GM12878 (cell line): ENCODE measurements at regions of chr4 and their contacts with region 1.

Region 1: DNA sequence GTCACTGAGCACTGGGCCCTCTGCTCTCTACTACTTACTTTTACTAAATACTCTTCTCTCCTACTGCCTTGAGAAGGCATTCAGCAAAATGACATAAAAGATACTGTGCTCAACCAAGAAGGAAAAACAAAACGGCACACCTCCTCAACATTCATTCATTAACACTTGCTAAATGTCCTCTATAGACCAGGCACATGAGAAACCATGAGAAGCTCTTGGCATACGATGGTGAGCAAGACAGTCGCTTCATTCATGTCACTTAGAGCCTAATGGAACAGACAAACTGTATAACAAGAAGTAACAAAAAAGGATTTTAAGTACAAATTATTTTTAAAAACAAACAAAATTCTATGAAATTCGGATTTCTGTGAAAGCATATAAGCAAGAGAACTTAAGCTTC is 38.7 kb downstream of the COL25A1 start:
- DNase-seq: no peak
- ATAC-seq: no peak
- H3K4me3 ChIP-seq: no peak overlapping the region
- H3K27ac ChIP-seq: no peak overlapping the region
- H3K4me1 ChIP-seq: no peaks in the 10 kb centered on the region
- H3K27me3 ChIP-seq: no peaks in the 10 kb centered on the region
- CTCF ChIP-seq: no peak
- EP300 ChIP-seq: no peak
- POLR2A ChIP-seq: no peak
- RAD21 ChIP-seq: no peak

Region 2: GRCh38 chr4:109169160-109169559 is 94.6 kb before region 1 on chr4:
- CTCF ChIA-PET with region 1: no interaction called
- POLR2A ChIA-PET with region 1: no interaction called
- RAD21 ChIA-PET with region 1: no interaction called
- SMC1A ChIA-PET with region 1: no interaction called
- in situ Hi-C with region 1: no loop called
- intact Hi-C with region 1: no loop called
- DNase-seq: no peak
- ATAC-seq: peak; percentile 23; the same call in 1 of the 3 replicates
- H3K4me3 ChIP-seq: no peak overlapping the region
- H3K27ac ChIP-seq: no peak overlapping the region
- H3K4me1 ChIP-seq: no peaks in the 10 kb centered on the region
- H3K27me3 ChIP-seq: no peaks in the 10 kb centered on the region
- CTCF ChIP-seq: no peak
- EP300 ChIP-seq: no peak
- POLR2A ChIP-seq: no peak
- RAD21 ChIP-seq: no peak

Region 3: DNA sequence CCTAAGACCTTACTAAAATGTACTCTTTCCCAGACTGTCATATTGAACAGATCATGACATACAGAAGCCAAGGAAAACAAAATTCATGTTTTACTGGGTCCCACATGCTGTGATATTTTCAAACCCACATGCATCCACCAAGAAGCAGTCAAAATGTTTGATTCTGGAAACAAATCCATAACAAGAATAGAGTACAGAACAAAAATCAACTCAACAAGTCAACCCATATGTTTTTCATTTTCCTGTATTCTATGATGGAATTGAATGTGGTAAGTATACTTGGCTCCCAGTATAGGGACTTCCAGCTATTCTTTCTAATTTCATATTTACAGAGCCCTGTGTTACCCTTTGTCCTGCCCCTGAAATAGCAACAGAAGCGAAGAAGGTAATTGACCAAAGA is 68.1 kb before region 1 on chr4:
- CTCF ChIA-PET with region 1: no interaction called
- POLR2A ChIA-PET with region 1: no interaction called
- RAD21 ChIA-PET with region 1: no interaction called
- SMC1A ChIA-PET with region 1: no interaction called
- in situ Hi-C with region 1: no loop called
- intact Hi-C with region 1: no loop called
- DNase-seq: no peak
- ATAC-seq: no peak
- H3K4me3 ChIP-seq: no peak overlapping the region
- H3K27ac ChIP-seq: no peak overlapping the region
- H3K4me1 ChIP-seq: no peaks in the 10 kb centered on the region
- H3K27me3 ChIP-seq: no peaks in the 10 kb centered on the region; a peak in 1 of 4 replicates
- CTCF ChIP-seq: no peak
- EP300 ChIP-seq: no peak
- POLR2A ChIP-seq: no peak
- RAD21 ChIP-seq: no peak

Region 4: DNA sequence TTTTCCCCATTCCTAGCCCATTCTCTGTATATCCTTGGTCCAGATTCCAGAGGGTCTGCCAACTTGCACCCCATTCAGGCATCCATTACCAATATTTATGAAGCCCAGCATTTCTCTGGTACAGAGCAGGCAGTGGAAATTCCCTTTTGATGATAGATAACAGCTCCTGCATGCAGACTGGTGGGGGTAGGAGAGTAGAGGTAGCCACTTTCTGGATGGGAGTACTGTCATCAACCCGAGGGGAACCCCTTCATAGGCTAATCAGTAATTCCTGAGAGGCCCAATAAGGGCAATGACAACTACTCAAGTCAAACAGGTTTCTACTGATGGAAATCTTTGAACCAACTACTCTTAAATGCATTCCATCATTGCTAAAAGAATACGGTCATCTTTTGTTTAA is 25.0 kb before region 1 on chr4:
- CTCF ChIA-PET with region 1: no interaction called
- POLR2A ChIA-PET with region 1: interaction called, 3 read pairs
- RAD21 ChIA-PET with region 1: no interaction called
- SMC1A ChIA-PET with region 1: interaction called, 11 read pairs
- in situ Hi-C with region 1: no loop called
- intact Hi-C with region 1: no loop called
- DNase-seq: no peak
- ATAC-seq: peak; percentile 89
- H3K4me3 ChIP-seq: no peak overlapping the region
- H3K27ac ChIP-seq: no peak overlapping the region
- H3K4me1 ChIP-seq: no peaks in the 10 kb centered on the region
- H3K27me3 ChIP-seq: no peaks in the 10 kb centered on the region
- CTCF ChIP-seq: no peak
- EP300 ChIP-seq: no peak
- POLR2A ChIP-seq: no peak
- RAD21 ChIP-seq: no peak

Region 5: GRCh38 chr4:109278594-109279031 is 14.9 kb after region 1 on chr4:
- CTCF ChIA-PET with region 1: interaction called, 9 read pairs
- POLR2A ChIA-PET with region 1: interaction called, 21 read pairs
- RAD21 ChIA-PET with region 1: interaction called, 25 read pairs
- SMC1A ChIA-PET with region 1: interaction called, 28 read pairs
- in situ Hi-C with region 1: no loop called
- intact Hi-C with region 1: no loop called
- DNase-seq: peak; percentile 32
- ATAC-seq: peak; percentile 90
- H3K4me3 ChIP-seq: no peak overlapping the region
- H3K27ac ChIP-seq: no peak overlapping the region
- H3K4me1 ChIP-seq: no peaks in the 10 kb centered on the region; the same call in 1 of the 2 replicates
- H3K27me3 ChIP-seq: no peaks in the 10 kb centered on the region
- CTCF ChIP-seq: no peak
- EP300 ChIP-seq: peak; percentile 84 to 95; a peak in 3 of 4 replicates
- POLR2A ChIP-seq: no peak
- RAD21 ChIP-seq: no peak